Naive thymus-derived CD4-positive, alpha-beta T cell (primary cell): ENCODE measurements at regions of chr16 and their contacts with region 1.

Region 1: GRCh38 chr16:66315210-66315825 is 51.2 kb upstream of the CDH5 start:
- DNase-seq: peak in 7 of 9 donors; percentile 1 to 50 (median 37)
- ATAC-seq: peak; percentile 87
- H3K4me3 ChIP-seq: no peak overlapping the region
- H3K4me3 Mint-ChIP-seq: no peak overlapping the region
- H3K27ac ChIP-seq: no peak overlapping the region
- H3K27ac Mint-ChIP-seq: peak overlapping the region in 1 of 9 donors; percentile 30
- H3K4me1 ChIP-seq: no peaks in the 10 kb centered on the region
- H3K4me1 Mint-ChIP-seq: peaks cover 0 to 4% (median 0%) of the 10 kb centered on the region in 7 donors
- H3K27me3 ChIP-seq: no peaks in the 10 kb centered on the region
- H3K27me3 Mint-ChIP-seq: peaks cover 0 to 13% (median 8%) of the 10 kb centered on the region in 5 donors

Region 2: GRCh38 chr16:66275775-66276428 is 39.4 kb before region 1 on chr16:
- CTCF ChIA-PET with region 1: no interaction called
- POLR2A ChIA-PET with region 1: no interaction called
- intact Hi-C with region 1: loop called (anchors 1 kb)
- DNase-seq: peak in 1 of 9 donors; percentile 22
- ATAC-seq: no peak
- H3K4me3 ChIP-seq: no peak overlapping the region
- H3K4me3 Mint-ChIP-seq: no peak overlapping the region
- H3K27ac ChIP-seq: no peak overlapping the region
- H3K27ac Mint-ChIP-seq: no peak overlapping the region
- H3K4me1 ChIP-seq: no peaks in the 10 kb centered on the region
- H3K4me1 Mint-ChIP-seq: peaks cover 0 to 14% (median 6%) of the 10 kb centered on the region in 7 donors
- H3K27me3 ChIP-seq: peaks cover 0 to 2% of the 10 kb centered on the region in 2 donors
- H3K27me3 Mint-ChIP-seq: peaks cover 26 to 44% (median 36%) of the 10 kb centered on the region in 5 donors